ENCODE measurements at regions of chr12 and their contacts with region 1.

Region 1: DNA sequence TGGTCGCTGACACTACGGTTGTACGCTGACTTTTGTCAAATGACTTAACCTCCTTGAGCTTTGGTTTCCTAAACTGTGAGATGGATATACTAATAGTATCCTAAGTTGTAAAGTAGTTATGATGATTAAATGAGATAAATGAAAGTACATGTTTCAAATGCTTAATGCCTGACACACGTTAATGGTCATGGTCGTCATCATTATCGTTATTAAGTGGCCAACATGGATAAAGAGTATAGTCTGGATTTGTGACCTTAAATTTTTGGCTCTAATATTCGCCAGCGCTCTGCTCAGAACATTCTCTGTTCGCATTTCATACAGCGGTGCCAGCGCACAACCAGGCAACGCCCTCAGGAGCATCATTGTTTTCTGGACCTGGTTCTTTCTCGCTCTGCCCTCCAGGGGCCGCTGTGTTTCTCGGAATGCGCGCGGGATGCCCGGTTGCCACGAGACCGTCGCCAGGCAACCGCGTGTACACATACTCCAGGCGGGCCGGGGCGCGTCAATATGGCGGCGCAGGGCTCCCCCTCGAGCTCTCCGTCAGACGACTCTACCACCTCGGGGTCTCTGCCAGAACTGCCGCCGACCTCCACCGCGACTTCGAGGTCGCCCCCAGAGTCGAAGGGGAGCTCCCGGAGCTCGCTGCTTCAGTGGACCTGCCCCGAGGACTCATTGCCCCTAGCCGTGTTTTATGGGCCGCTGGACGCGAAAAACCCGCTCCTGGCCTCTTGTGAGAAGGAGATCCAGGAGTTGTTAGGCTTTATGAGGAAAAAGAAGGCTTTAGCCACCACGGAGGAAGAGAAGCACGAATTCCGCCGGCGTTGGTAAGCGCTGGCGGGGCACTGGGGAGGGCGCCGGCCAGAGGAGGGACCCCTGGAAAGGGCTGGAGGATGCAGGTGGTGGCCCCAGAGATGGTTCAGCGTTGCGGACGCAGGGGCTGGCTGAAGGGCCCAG is at the start of gene CFAP54:
- DNase-seq: peak; percentile 91 to 98 (median 95)
- ATAC-seq: peak; percentile 88
- H3K4me3 ChIP-seq: peak within 1 kb of the TSS; percentile 72 to 75
- H3K4me3 Mint-ChIP-seq: peak within 1 kb of the TSS; percentile 91
- H3K27ac ChIP-seq: peak within 1 kb of the TSS; percentile 58 to 76
- H3K27ac Mint-ChIP-seq: peak within 1 kb of the TSS; percentile 82
- H3K4me1 ChIP-seq: peaks cover 23% of the 10 kb centered on the region
- H3K4me1 Mint-ChIP-seq: peaks cover 24% of the 10 kb centered on the region
- H3K27me3 ChIP-seq: no peaks in the 10 kb centered on the region
- H3K27me3 Mint-ChIP-seq: no peaks in the 10 kb centered on the region
- CTCF ChIP-seq: peak; percentile 85
- total RNA-seq, gene CFAP54: 1.0 to 1.2 TPM

Region 2: GRCh38 chr12:95858479-95859343 is 630.7 kb before region 1 on chr12 and contains the start of gene SNRPF:
- CTCF ChIA-PET with region 1: no interaction called
- POLR2A ChIA-PET with region 1: no interaction called
- intact Hi-C with region 1: loop called in 1 of 2 experiments (anchors 10 kb)
- DNase-seq: peak; percentile 88 to 97 (median 92)
- ATAC-seq: peak; percentile 94
- H3K4me3 ChIP-seq: peak within 1 kb of the TSS; percentile 83 to 86
- H3K4me3 Mint-ChIP-seq: no peak within 1 kb of the TSS
- H3K27ac ChIP-seq: peak within 1 kb of the TSS; percentile 79 to 92
- H3K27ac Mint-ChIP-seq: no peak within 1 kb of the TSS
- H3K4me1 ChIP-seq: peaks cover 22% of the 10 kb centered on the region
- H3K4me1 Mint-ChIP-seq: peaks cover 21% of the 10 kb centered on the region
- H3K27me3 ChIP-seq: peaks cover 0 to 2% of the 10 kb centered on the region in 2 experiments
- H3K27me3 Mint-ChIP-seq: peaks cover 3% of the 10 kb centered on the region
- CTCF ChIP-seq: no peak
- total RNA-seq, gene SNRPF: 42.9 to 49.2 TPM

Region 3: DNA sequence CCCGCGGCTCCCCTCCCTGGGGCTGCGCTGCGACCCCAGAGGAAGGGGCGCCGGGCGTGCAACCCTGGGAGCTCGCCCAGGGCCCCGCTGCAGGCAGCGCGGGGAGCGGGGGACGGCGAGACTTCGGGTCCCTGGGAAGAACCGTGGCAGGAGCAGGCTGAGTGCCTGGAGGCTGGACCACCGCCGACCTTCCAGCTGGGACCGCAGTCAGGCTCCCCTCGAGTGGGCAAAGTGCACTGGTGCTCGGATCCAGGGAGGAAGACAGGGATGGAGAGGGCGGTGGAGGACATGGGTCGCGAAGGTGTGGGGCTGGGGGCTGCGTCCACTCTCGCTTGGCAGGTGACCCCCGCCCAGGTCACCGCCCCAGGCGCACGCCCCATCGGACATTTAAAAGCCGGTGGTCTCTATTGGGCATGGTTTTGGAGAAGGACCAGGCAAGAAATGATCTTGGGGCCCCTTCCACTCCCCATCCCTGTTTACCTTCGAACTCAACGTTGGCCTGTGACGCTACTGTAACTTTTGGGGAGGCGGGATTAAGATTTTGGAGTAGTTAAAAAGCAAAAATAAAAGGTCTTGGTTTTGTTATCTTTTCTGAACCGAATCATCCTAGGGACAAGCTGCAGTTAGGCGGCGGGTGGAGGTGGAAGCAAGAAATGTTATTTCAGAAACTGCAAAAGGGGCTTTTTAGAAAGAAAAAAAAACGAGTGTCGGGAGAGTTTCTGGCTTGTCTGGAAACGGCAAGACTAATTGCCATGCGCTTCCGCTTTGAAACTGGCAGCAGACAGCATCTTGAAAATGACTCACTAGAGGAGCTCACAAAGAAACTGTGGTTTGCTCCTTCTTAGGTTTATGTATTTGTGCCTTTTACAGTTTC is 294.2 kb before region 1 on chr12:
- CTCF ChIA-PET with region 1: no interaction called
- POLR2A ChIA-PET with region 1: no interaction called
- intact Hi-C with region 1: loop called in 1 of 2 experiments (anchors 5 kb)
- DNase-seq: peak; percentile 37 to 93 (median 73)
- ATAC-seq: peak; percentile 70
- H3K4me3 ChIP-seq: peak overlapping the region; percentile 87 to 95
- H3K4me3 Mint-ChIP-seq: peak overlapping the region; percentile 94
- H3K27ac ChIP-seq: peak overlapping the region; percentile 74 to 77
- H3K27ac Mint-ChIP-seq: peak overlapping the region; percentile 97
- H3K4me1 ChIP-seq: peaks cover 43% of the 10 kb centered on the region
- H3K4me1 Mint-ChIP-seq: peaks cover 64% of the 10 kb centered on the region
- H3K27me3 ChIP-seq: no peaks in the 10 kb centered on the region
- H3K27me3 Mint-ChIP-seq: no peaks in the 10 kb centered on the region
- CTCF ChIP-seq: no peak

Region 4: GRCh38 chr12:96419576-96420271 is 69.7 kb before region 1 on chr12:
- CTCF ChIA-PET with region 1: no interaction called
- POLR2A ChIA-PET with region 1: no interaction called
- intact Hi-C with region 1: loop called in 1 of 2 experiments (anchors 1 kb)
- DNase-seq: no peak
- ATAC-seq: no peak
- H3K4me3 ChIP-seq: no peak overlapping the region
- H3K4me3 Mint-ChIP-seq: no peak overlapping the region
- H3K27ac ChIP-seq: no peak overlapping the region
- H3K27ac Mint-ChIP-seq: peak overlapping the region; percentile 32
- H3K4me1 ChIP-seq: no peaks in the 10 kb centered on the region
- H3K4me1 Mint-ChIP-seq: peaks cover 22% of the 10 kb centered on the region
- H3K27me3 ChIP-seq: no peaks in the 10 kb centered on the region
- H3K27me3 Mint-ChIP-seq: no peaks in the 10 kb centered on the region
- CTCF ChIP-seq: no peak

Region 5: GRCh38 chr12:96445691-96446583 is 43.4 kb before region 1 on chr12:
- CTCF ChIA-PET with region 1: interaction called, 3 read pairs
- POLR2A ChIA-PET with region 1: interaction called, 3 read pairs
- intact Hi-C with region 1: loop called (anchors 1 to 5 kb)
- DNase-seq: peak; percentile 24 to 95 (median 54)
- ATAC-seq: peak; percentile 92
- H3K4me3 ChIP-seq: peak overlapping the region in 1 of 2 experiments; percentile 20
- H3K4me3 Mint-ChIP-seq: peak overlapping the region; percentile 10
- H3K27ac ChIP-seq: peak overlapping the region; percentile 70 to 97
- H3K27ac Mint-ChIP-seq: peak overlapping the region; percentile 93
- H3K4me1 ChIP-seq: peaks cover 29% of the 10 kb centered on the region
- H3K4me1 Mint-ChIP-seq: peaks cover 40% of the 10 kb centered on the region
- H3K27me3 ChIP-seq: no peaks in the 10 kb centered on the region
- H3K27me3 Mint-ChIP-seq: no peaks in the 10 kb centered on the region
- CTCF ChIP-seq: no peak

Region 6: GRCh38 chr12:96516472-96517430 is 27.4 kb after region 1 on chr12:
- CTCF ChIA-PET with region 1: interaction called, 55 read pairs
- POLR2A ChIA-PET with region 1: interaction called, 3 read pairs
- intact Hi-C with region 1: loop called (anchors 1 kb)
- DNase-seq: peak; percentile 73 to 91 (median 88)
- ATAC-seq: peak; percentile 89
- H3K4me3 ChIP-seq: no peak overlapping the region
- H3K4me3 Mint-ChIP-seq: peak overlapping the region; percentile 50
- H3K27ac ChIP-seq: no peak overlapping the region
- H3K27ac Mint-ChIP-seq: no peak overlapping the region
- H3K4me1 ChIP-seq: peaks cover 11% of the 10 kb centered on the region
- H3K4me1 Mint-ChIP-seq: peaks cover 11% of the 10 kb centered on the region
- H3K27me3 ChIP-seq: no peaks in the 10 kb centered on the region
- H3K27me3 Mint-ChIP-seq: no peaks in the 10 kb centered on the region
- CTCF ChIP-seq: peak; percentile 91

Measured in CD8-positive, alpha-beta T cell (primary cell).